Heart right ventricle (tissue), 16 donors: ENCODE measurements at regions of chr7 and their contacts with region 1.

Region 1: DNA sequence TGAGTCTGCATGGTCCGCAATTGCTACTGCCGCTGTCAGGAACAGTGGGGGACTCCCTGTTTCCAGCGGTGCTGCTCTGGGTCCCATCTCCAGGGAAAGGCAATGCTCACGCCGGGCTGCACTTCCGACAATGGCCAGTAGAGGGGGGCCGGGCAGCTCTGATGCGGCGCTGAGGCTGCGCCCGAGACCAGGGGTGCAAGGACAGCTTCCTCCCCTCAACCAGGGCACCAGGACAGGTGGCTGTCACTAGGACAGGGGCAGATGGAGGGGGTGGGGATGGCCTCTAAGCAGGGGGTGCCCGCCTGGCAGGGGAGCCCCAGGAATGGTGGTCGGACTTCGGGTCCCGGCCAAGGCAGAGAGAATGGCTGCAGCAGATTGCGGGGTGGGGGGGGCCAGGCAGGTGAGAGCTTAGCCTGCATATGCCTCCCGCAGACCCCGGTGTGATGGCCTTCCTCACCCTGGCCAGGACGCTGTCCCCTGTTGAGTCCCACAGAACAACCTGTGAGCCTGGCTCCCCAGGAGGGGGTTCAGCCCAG is 71.0 kb upstream of the KCTD7 start:
- DNase-seq: peak; percentile 57 to 79
- ATAC-seq: peak; percentile 72 to 92 (median 83)
- H3K4me3 ChIP-seq: no peak overlapping the region
- H3K27ac ChIP-seq: no peak overlapping the region
- H3K4me1 ChIP-seq: peaks cover 0 to 10% (median 0%) of the 10 kb centered on the region in 9 donors
- H3K27me3 ChIP-seq: no peaks in the 10 kb centered on the region
- CTCF ChIP-seq: peak; percentile 88 to 94 (median 91)

Region 2: DNA sequence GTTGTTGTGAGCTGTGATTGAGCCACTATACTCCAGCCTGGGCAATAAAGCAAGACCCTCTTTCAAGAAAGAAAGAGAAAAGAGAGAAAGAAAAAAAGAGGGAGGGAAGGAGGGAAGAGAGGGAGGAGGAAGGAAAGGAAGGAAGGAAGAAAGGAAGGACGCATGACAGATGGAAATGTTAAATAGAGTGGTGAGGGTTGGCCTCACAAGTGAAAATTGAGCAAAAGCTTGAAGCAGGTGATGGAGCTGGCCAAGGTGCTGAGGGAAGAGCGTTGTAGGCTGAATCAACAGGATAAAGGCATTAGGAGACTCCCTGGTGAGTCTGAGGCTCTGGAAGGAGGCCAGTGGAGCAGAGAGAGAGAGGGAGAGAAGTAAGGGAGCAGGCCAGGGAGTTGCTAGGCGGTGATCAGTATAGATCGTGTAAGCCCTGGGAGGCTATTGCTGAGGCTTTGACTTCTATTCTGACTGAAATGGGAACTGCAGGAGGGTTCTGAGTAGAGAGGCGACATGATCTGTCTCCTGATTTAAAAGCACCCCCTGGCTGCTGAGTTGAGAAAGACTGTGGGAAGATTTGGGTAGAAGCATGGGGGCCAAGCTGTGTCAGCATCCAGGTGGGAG is 336.9 kb after region 1 on chr7:
- intact Hi-C with region 1: loop called in 1 of 10 experiments (anchors 5 kb)
- DNase-seq: no peak
- ATAC-seq: no peak
- H3K4me3 ChIP-seq: no peak overlapping the region
- H3K27ac ChIP-seq: no peak overlapping the region
- H3K4me1 ChIP-seq: no peaks in the 10 kb centered on the region
- H3K27me3 ChIP-seq: no peaks in the 10 kb centered on the region
- CTCF ChIP-seq: peak in 5 of 9 donors; percentile 14 to 39 (median 21)

Region 3: DNA sequence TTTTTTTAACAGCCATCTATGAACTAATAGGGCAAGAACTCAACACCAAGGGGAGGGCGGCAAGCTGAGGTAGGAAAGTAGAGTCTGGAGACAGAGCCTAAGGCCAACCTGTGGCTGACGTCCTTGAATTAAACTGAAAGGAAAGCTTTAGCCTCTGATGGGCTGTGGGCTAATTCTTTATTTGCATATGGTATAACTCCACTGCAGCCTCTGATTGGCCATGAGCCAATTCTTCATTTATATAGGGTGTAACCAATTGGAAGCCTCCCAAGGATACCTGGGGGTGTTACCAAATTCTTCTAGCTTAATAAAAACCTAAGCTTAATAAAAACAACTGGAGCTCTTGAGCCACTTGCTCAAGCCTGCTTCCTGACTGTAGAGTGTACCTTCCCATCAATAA is 449.3 kb after region 1 on chr7:
- intact Hi-C with region 1: loop called in 1 of 10 experiments (anchors 10 kb)
- DNase-seq: no peak
- ATAC-seq: no peak
- H3K4me3 ChIP-seq: no peak overlapping the region
- H3K27ac ChIP-seq: no peak overlapping the region
- H3K4me1 ChIP-seq: no peaks in the 10 kb centered on the region
- H3K27me3 ChIP-seq: no peaks in the 10 kb centered on the region
- CTCF ChIP-seq: no peak